ENCODE measurements at regions of chr10 and their contacts with region 1.

Region 1: GRCh38 chr10:79286318-79286951 is 60.8 kb upstream of the PPIF start:
- DNase-seq: peak; percentile 92
- ATAC-seq: peak; percentile 86
- H3K4me3 ChIP-seq: peak overlapping the region; percentile 35; the same call in 1 of the 2 replicates
- H3K27ac ChIP-seq: peak overlapping the region; percentile 98
- H3K4me1 ChIP-seq: peaks cover 58% of the 10 kb centered on the region
- H3K27me3 ChIP-seq: no peaks in the 10 kb centered on the region
- CTCF ChIP-seq: no peak
- EP300 ChIP-seq: peak; percentile 91 to 95
- POLR2A ChIP-seq: peak; percentile 95
- RAD21 ChIP-seq: no peak

Region 2: GRCh38 chr10:79242620-79243152 is 43.7 kb before region 1 on chr10:
- CTCF ChIA-PET with region 1: interaction called, 67 read pairs
- POLR2A ChIA-PET with region 1: interaction called, 100 read pairs
- RAD21 ChIA-PET with region 1: interaction called, 165 read pairs
- SMC1A ChIA-PET with region 1: interaction called, 115 read pairs
- in situ Hi-C with region 1: no loop called
- intact Hi-C with region 1: no loop called
- DNase-seq: no peak
- ATAC-seq: peak; percentile 39
- H3K4me3 ChIP-seq: peak overlapping the region; percentile 90
- H3K27ac ChIP-seq: peak overlapping the region; percentile 75
- H3K4me1 ChIP-seq: peaks cover 40% of the 10 kb centered on the region
- H3K27me3 ChIP-seq: no peaks in the 10 kb centered on the region
- CTCF ChIP-seq: no peak
- EP300 ChIP-seq: no peak
- POLR2A ChIP-seq: peak; percentile 86
- RAD21 ChIP-seq: no peak

Region 3: GRCh38 chr10:79249186-79250121 is 37.0 kb before region 1 on chr10:
- CTCF ChIA-PET with region 1: interaction called, 67 read pairs
- POLR2A ChIA-PET with region 1: interaction called, 100 read pairs
- RAD21 ChIA-PET with region 1: interaction called, 165 read pairs
- SMC1A ChIA-PET with region 1: interaction called, 115 read pairs
- in situ Hi-C with region 1: no loop called
- intact Hi-C with region 1: loop called (anchors 1 kb)
- DNase-seq: peak; percentile 74
- ATAC-seq: peak; percentile 54
- H3K4me3 ChIP-seq: peak overlapping the region; percentile 80
- H3K27ac ChIP-seq: peak overlapping the region; percentile 92
- H3K4me1 ChIP-seq: peaks cover 91% of the 10 kb centered on the region
- H3K27me3 ChIP-seq: no peaks in the 10 kb centered on the region
- CTCF ChIP-seq: no peak
- EP300 ChIP-seq: no peak
- POLR2A ChIP-seq: peak; percentile 62
- RAD21 ChIP-seq: no peak

Region 4: GRCh38 chr10:79266543-79267312 is 19.7 kb before region 1 on chr10:
- CTCF ChIA-PET with region 1: interaction called, 3 read pairs
- POLR2A ChIA-PET with region 1: interaction called, 3 read pairs
- RAD21 ChIA-PET with region 1: interaction called, 8 read pairs
- SMC1A ChIA-PET with region 1: interaction called, 15 read pairs
- in situ Hi-C with region 1: no loop called
- intact Hi-C with region 1: loop called (anchors 1 kb)
- DNase-seq: peak; percentile 81
- ATAC-seq: peak; percentile 89
- H3K4me3 ChIP-seq: peak overlapping the region; percentile 19; the same call in 1 of the 2 replicates
- H3K27ac ChIP-seq: peak overlapping the region; percentile 91
- H3K4me1 ChIP-seq: peaks cover 65% of the 10 kb centered on the region
- H3K27me3 ChIP-seq: no peaks in the 10 kb centered on the region
- CTCF ChIP-seq: no peak
- EP300 ChIP-seq: peak; percentile 62 to 91; a peak in 3 of 4 replicates
- POLR2A ChIP-seq: no peak
- RAD21 ChIP-seq: no peak

Region 5: DNA sequence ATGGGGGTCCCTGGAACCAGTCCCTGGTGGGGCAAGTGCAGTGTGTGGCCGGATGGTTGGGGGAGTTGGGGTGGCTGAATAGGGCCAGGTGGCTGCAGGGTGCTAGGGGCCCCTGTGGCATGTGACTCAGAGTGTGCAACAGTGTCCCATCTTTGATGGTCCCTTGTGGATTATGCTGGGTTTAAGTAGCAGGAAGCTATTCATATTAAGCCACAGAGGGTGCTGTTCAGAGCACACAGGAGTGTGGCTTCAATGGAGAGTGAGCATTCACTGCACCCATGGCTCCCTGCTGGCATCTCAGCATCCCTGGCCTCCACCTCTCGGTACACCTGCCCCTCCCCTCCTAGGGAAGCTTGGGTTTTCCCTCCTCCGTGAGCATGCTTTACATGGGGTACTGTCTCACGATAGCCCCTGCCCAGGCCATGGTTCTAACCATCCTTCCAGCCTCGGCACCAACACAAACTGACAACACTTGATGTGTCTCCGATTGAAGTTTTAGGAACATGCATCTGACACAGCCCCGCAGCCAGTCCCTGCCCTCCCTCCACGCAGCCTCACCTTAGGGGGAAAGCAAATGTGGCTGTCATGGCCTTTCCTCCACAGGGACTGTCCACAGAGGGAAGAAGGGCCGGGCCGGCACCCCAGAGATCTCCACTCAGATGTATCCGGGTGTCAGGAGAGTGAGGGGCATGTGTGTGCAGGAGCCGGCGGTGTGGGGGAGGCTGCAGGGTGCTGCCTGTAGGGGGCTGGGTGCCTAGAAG is 30.4 kb after region 1 on chr10:
- CTCF ChIA-PET with region 1: interaction called, 7 read pairs
- POLR2A ChIA-PET with region 1: interaction called, 10 read pairs
- RAD21 ChIA-PET with region 1: interaction called, 9 read pairs
- SMC1A ChIA-PET with region 1: interaction called, 14 read pairs
- in situ Hi-C with region 1: no loop called
- intact Hi-C with region 1: loop called (anchors 1 kb)
- DNase-seq: peak; percentile 56
- ATAC-seq: peak; percentile 82
- H3K4me3 ChIP-seq: peak overlapping the region; percentile 37; the same call in 1 of the 2 replicates
- H3K27ac ChIP-seq: peak overlapping the region; percentile 62
- H3K4me1 ChIP-seq: peaks cover 33% of the 10 kb centered on the region
- H3K27me3 ChIP-seq: no peaks in the 10 kb centered on the region
- CTCF ChIP-seq: peak; percentile 12 to 35 (median 28); a peak in 4 of 6 replicates
- EP300 ChIP-seq: peak in 1 of 2 experiments; percentile 50; a peak in 1 of 4 replicates
- POLR2A ChIP-seq: peak; percentile 56; the same call in 1 of the 2 replicates
- RAD21 ChIP-seq: 0 out of 2 replicates have a peak, but pooled peaks have one; percentile 6

Measured in GM12878 (cell line).